A549 (cell line): ENCODE measurements at regions of chr6 and their contacts with region 1.

Region 1: GRCh38 chr6:31128093-31128676 is 7.9 kb upstream of the CDSN start:
- DNase-seq: peak; percentile 37 to 39
- ATAC-seq: peak in 1 of 2 experiments; percentile 71; a peak in 4 of 6 replicates
- H3K4me3 ChIP-seq: no peak overlapping the region
- H3K27ac ChIP-seq: no peak overlapping the region
- H3K4me1 ChIP-seq: peaks cover 23% of the 10 kb centered on the region
- CTCF ChIP-seq: peak; percentile 63
- EP300 ChIP-seq: no peak
- POLR2A ChIP-seq: no peak
- RAD21 ChIP-seq: peak; percentile 42 to 51; a peak in 3 of 5 replicates

Region 2: DNA sequence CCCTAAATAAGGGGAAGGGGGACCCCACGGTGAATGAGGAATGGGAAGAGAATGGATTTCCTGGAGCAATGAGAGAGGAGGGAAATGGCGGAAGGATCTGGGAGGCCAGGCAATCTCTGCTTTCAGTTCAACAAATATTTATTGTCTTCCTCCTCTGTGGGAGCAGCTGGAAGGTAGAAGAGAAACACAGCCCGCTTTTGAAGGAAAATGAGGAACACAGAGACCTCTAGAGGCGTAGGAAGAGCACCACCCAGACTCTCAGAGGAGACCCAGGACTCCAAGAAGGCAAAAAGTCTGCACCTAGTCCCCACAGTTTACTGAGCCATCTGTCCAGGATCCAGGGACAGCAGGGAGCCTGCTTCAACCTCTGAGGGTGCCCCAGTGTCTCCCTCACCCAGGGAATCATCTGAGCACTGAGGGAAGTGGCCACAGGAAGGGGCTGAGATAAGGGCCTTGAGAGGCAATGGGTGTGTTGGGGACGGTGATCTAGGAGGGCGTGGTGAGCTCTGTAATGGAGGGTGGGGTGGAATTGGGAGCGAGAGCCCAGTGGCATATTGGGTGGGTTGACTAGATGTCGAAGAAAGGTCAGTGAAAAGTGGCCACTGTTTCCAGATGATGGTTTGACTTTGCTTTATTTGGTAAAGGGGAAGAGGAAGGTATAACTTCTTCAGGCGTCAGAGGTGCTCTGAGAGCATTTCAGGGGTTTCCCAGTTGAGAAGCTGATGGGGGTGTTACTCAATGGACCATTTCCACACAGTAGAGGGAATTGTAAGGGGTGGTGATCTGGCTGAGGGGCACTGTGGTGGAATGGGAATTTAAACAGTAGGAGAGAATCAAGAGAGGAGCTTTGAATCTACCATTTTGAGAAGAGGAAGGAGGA is 13.0 kb before region 1 on chr6:
- CTCF ChIA-PET with region 1: interaction called, 27 read pairs
- POLR2A ChIA-PET with region 1: interaction called, 3 read pairs
- DNase-seq: peak; percentile 50 to 79
- ATAC-seq: peak; percentile 87 to 92
- H3K4me3 ChIP-seq: peak overlapping the region; percentile 40
- H3K27ac ChIP-seq: peak overlapping the region; percentile 92 to 93
- H3K4me1 ChIP-seq: peaks cover 16% of the 10 kb centered on the region
- CTCF ChIP-seq: peak; percentile 46
- EP300 ChIP-seq: no peak
- POLR2A ChIP-seq: no peak
- RAD21 ChIP-seq: peak; percentile 53 to 61; a peak in 4 of 5 replicates

Region 3: GRCh38 chr6:31139599-31139998 is 11.4 kb after region 1 on chr6:
- CTCF ChIA-PET with region 1: interaction called, 13 read pairs
- POLR2A ChIA-PET with region 1: no interaction called
- DNase-seq: peak in 1 of 2 experiments; percentile 22
- ATAC-seq: peak in 1 of 2 experiments; percentile 33; a peak in 3 of 6 replicates
- H3K4me3 ChIP-seq: no peak overlapping the region
- H3K27ac ChIP-seq: 0 out of 6 replicates have a peak overlapping the region, but pooled peaks of 1 of the 2 experiments have one; percentile 16
- H3K4me1 ChIP-seq: peaks cover 10% of the 10 kb centered on the region; the same call in 2 of the 3 replicates
- CTCF ChIP-seq: no peak
- EP300 ChIP-seq: no peak
- POLR2A ChIP-seq: no peak
- RAD21 ChIP-seq: no peak

Region 4: GRCh38 chr6:31197559-31198305 is 69.5 kb after region 1 on chr6:
- CTCF ChIA-PET with region 1: interaction called, 46 read pairs
- POLR2A ChIA-PET with region 1: no interaction called
- DNase-seq: peak; percentile 40 to 83
- ATAC-seq: peak; percentile 89 to 94
- H3K4me3 ChIP-seq: peak overlapping the region; percentile 68
- H3K27ac ChIP-seq: peak overlapping the region; percentile 84 to 96
- H3K4me1 ChIP-seq: peaks cover 3% of the 10 kb centered on the region
- CTCF ChIP-seq: no peak
- EP300 ChIP-seq: no peak
- POLR2A ChIP-seq: peak; percentile 30; the same call in 1 of the 2 replicates
- RAD21 ChIP-seq: no peak